ENCODE measurements at regions of chr11 and their contacts with region 1.

Region 1: DNA sequence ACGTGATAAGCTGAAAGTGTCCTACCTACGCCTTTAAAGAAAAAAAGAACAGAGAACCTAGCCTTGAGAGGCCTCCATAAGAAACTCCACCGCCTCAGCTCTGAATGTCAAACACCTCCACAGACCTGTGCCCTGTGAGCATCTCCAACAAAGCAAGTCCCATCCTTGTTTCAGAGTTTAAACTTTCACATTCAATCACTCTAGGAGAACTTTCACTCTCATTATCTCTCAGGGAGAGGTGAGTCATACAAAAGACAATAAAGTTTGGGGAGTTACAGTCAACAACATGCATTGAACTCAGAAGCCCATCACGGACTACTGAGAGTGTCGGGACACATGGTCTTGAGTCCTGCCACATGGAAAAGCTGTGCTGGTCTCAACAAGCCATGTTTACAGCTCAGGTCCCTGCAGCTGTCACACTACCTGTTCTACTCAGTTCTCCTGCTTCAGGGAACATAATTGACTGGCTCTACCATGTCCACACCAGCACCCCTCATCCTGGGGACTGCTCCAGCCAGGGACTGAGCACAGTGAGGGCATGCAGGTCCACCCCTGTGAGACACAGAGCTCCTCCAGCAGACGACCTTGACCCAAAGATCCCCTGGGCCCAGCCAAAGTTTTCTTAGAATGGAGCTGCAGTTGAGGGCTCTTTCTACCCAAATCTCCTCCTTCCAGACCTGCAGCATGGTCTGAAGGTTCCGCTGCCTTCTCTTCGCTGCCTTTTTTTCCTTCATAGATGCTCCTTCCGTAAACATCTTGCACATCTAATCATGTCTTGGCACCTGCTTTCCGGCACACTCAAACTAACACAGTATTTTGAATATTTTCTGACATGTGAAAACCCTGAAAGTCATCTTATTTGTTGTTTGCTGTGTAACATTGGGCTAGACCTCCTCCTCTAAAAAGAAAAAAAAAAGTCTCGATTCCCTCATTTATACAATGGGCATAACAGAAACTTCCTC is 114.9 kb downstream of the ETS1 start:
- DNase-seq: peak; percentile 91
- H3K4me3 Mint-ChIP-seq: peak overlapping the region; percentile 85
- H3K27ac Mint-ChIP-seq: peak overlapping the region; percentile 96
- H3K4me1 Mint-ChIP-seq: peaks cover 95% of the 10 kb centered on the region
- H3K27me3 Mint-ChIP-seq: no peaks in the 10 kb centered on the region

Region 2: GRCh38 chr11:128146926-128147605 is 325.3 kb before region 1 on chr11:
- intact Hi-C with region 1: no loop called
- DNase-seq: no peak
- H3K4me3 Mint-ChIP-seq: no peak overlapping the region
- H3K27ac Mint-ChIP-seq: no peak overlapping the region
- H3K4me1 Mint-ChIP-seq: no peaks in the 10 kb centered on the region
- H3K27me3 Mint-ChIP-seq: peaks cover 10% of the 10 kb centered on the region

Region 3: DNA sequence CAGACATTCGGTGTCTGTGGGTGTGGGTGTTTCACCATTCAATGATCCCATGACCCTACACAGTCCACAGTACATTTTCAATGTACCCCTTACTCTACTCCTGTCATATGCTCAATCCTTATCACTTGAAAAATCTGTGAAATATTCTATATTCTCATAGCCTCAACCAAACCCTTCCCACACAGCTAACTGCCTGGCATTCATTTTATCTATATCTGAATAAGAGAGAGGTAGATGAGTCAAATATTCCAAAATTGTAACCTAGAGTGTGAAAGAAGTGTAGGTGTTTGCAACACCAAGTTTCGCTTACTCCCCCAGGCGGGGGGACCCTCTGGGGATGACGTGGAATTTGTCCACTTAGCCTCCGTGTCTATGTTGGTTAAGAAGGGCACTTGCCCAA is 239.8 kb before region 1 on chr11:
- intact Hi-C with region 1: loop called (anchors 1 kb)
- DNase-seq: peak; percentile 68
- H3K4me3 Mint-ChIP-seq: peak overlapping the region; percentile 55
- H3K27ac Mint-ChIP-seq: peak overlapping the region; percentile 90
- H3K4me1 Mint-ChIP-seq: peaks cover 41% of the 10 kb centered on the region
- H3K27me3 Mint-ChIP-seq: no peaks in the 10 kb centered on the region

Region 4: DNA sequence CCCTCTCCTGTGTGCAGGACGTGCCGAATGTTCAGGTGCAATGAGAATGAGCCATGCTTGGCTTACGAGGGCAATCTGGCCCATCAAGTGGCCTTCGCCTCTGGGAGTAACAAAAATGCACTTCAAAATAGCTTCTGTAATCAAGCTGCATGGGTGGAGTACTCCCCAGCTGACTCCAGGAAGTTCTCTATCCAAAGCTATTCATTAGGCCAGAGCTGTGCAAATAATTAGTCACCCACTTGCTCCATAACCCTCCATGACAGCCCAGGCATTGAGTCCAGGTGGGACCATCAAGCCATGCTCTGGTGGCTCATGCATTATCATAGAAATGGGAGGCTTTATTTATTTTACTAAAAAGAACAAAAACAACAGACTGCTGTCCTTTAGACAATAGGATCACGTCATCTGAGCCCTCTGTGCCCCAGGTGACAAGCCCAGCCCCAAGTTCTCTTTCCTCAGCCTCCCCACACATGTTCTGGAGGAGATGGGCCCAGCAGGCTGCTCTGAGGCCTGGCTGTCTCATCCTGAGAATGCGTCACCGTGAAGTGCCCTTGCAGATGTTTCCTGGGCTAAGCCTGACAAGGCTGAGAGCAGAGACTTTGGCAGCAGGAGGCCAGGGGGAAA is 129.8 kb before region 1 on chr11:
- intact Hi-C with region 1: loop called (anchors 1 kb)
- DNase-seq: peak; percentile 90
- H3K4me3 Mint-ChIP-seq: peak overlapping the region; percentile 24
- H3K27ac Mint-ChIP-seq: peak overlapping the region; percentile 88
- H3K4me1 Mint-ChIP-seq: peaks cover 79% of the 10 kb centered on the region
- H3K27me3 Mint-ChIP-seq: no peaks in the 10 kb centered on the region

Region 5: GRCh38 chr11:128488471-128488870 is 16.1 kb after region 1 on chr11:
- intact Hi-C with region 1: loop called (anchors 1 kb)
- DNase-seq: no peak
- H3K4me3 Mint-ChIP-seq: peak overlapping the region; percentile 70
- H3K27ac Mint-ChIP-seq: peak overlapping the region; percentile 95
- H3K4me1 Mint-ChIP-seq: peaks cover 92% of the 10 kb centered on the region
- H3K27me3 Mint-ChIP-seq: no peaks in the 10 kb centered on the region

Region 6: GRCh38 chr11:128522055-128522942 is 49.9 kb after region 1 on chr11:
- intact Hi-C with region 1: loop called (anchors 2 kb)
- DNase-seq: peak; percentile 97
- H3K4me3 Mint-ChIP-seq: peak overlapping the region; percentile 93
- H3K27ac Mint-ChIP-seq: peak overlapping the region; percentile 99
- H3K4me1 Mint-ChIP-seq: peaks cover 54% of the 10 kb centered on the region
- H3K27me3 Mint-ChIP-seq: no peaks in the 10 kb centered on the region

Region 7: GRCh38 chr11:128630367-128631230 is 158.2 kb after region 1 on chr11:
- intact Hi-C with region 1: loop called (anchors 1 kb)
- DNase-seq: peak; percentile 96
- H3K4me3 Mint-ChIP-seq: peak overlapping the region; percentile 69
- H3K27ac Mint-ChIP-seq: peak overlapping the region; percentile 92
- H3K4me1 Mint-ChIP-seq: peaks cover 61% of the 10 kb centered on the region
- H3K27me3 Mint-ChIP-seq: no peaks in the 10 kb centered on the region